Activated CD8-positive, alpha-beta memory T cell treated with anti-CD3 and anti-CD28 coated beads, Interleukin-2, amount 10 ng/mL, durations not matched to agents 7 days and 5 days (primary cell): ENCODE measurements at regions of chr3 and their contacts with region 1.

Region 1: GRCh38 chr3:30199096-30199759 is 407.2 kb upstream of the TGFBR2 start:
- DNase-seq: peak; percentile 73
- ATAC-seq: no peak
- H3K4me3 Mint-ChIP-seq: no peak overlapping the region
- H3K27ac Mint-ChIP-seq: no peak overlapping the region
- H3K4me1 Mint-ChIP-seq: no peaks in the 10 kb centered on the region
- H3K27me3 Mint-ChIP-seq: no peaks in the 10 kb centered on the region

Region 2: DNA sequence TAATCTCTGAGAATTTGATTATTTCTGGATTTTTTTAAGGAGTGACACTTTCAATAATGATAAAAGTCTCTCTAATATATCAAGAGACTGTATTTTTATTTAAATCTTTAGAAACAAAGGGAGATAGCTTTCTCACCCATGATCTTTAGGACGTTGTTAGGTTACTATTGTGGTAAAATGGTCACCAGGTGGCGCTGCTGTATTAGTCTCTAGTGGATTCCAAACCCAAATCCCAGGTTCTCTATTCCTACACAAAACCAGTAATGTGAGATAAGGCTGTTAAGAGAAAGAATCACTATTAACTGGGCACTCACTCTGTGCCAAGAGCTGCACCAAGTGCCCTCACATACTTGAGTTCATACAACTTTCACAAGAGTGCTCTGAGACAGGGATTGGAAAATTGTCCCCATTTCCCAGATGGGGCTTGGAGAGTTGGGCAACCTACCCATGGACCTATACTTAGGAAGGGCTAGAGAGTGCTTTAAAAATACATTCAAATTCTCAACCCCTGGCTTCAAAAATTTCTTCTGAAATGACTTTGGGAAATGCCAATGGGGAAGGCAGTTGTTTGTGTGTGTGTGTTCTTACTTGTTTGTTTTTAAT is 186.2 kb before region 1 on chr3:
- CTCF ChIA-PET with region 1: interaction called, 19 read pairs
- DNase-seq: peak; percentile 53
- ATAC-seq: no peak
- H3K4me3 Mint-ChIP-seq: no peak overlapping the region
- H3K27ac Mint-ChIP-seq: no peak overlapping the region
- H3K4me1 Mint-ChIP-seq: peaks cover 3% of the 10 kb centered on the region
- H3K27me3 Mint-ChIP-seq: peaks cover 20% of the 10 kb centered on the region

Region 3: DNA sequence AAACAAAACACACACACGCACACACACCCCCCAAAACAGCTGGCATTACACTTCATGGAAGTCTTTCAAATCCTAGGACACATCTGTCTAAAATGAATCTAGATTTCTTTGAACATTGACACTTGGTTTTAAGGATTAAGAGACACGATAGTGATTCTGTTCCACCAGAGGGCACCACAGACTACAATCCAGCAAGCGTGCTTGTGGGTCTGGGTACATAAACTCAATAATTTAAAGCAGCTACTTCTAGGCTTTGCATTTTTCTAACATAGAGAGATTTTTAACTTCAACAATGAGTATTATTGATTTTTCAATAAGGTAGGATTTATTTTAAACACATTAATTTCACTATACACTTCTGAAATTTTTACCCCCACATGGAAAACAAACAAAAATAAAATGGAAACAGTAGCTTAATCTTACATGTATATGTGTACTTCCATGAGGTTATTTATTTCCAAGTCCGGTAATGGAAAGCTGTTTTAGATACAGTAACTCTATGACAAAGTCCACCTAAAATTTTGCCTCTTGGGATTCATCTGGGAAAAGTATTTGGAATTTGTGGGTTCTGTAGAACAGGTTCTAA is 156.9 kb before region 1 on chr3:
- CTCF ChIA-PET with region 1: interaction called, 36 read pairs
- DNase-seq: peak; percentile 64
- ATAC-seq: no peak
- H3K4me3 Mint-ChIP-seq: no peak overlapping the region
- H3K27ac Mint-ChIP-seq: no peak overlapping the region
- H3K4me1 Mint-ChIP-seq: no peaks in the 10 kb centered on the region
- H3K27me3 Mint-ChIP-seq: peaks cover 24% of the 10 kb centered on the region

Region 4: GRCh38 chr3:30112902-30113484 is 86.2 kb before region 1 on chr3:
- CTCF ChIA-PET with region 1: interaction called, 11 read pairs
- DNase-seq: no peak
- ATAC-seq: peak; percentile 36
- H3K4me3 Mint-ChIP-seq: no peak overlapping the region
- H3K27ac Mint-ChIP-seq: no peak overlapping the region
- H3K4me1 Mint-ChIP-seq: no peaks in the 10 kb centered on the region
- H3K27me3 Mint-ChIP-seq: peaks cover 4% of the 10 kb centered on the region

Region 5: DNA sequence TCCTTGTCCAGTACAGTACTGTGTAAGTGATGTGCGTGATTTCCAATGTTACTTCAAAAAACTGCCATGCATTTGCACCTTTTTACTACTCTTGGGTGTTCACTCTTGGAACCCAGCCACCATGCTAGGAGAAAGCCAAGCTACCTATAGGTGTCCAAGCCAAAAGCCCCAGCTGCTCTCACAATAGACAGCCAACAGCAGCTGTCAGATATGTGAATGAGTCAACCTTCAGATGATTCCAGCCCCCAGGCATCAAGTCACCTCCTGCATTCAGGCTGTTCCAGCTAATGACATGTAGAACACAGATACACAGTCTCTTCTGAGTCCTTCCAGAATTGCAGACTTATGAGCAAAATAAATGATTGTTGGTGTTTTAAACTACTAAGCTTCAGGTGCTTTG is 10.5 kb before region 1 on chr3:
- CTCF ChIA-PET with region 1: interaction called, 11 read pairs
- DNase-seq: no peak
- ATAC-seq: no peak
- H3K4me3 Mint-ChIP-seq: no peak overlapping the region
- H3K27ac Mint-ChIP-seq: no peak overlapping the region
- H3K4me1 Mint-ChIP-seq: no peaks in the 10 kb centered on the region
- H3K27me3 Mint-ChIP-seq: peaks cover 13% of the 10 kb centered on the region

Region 6: DNA sequence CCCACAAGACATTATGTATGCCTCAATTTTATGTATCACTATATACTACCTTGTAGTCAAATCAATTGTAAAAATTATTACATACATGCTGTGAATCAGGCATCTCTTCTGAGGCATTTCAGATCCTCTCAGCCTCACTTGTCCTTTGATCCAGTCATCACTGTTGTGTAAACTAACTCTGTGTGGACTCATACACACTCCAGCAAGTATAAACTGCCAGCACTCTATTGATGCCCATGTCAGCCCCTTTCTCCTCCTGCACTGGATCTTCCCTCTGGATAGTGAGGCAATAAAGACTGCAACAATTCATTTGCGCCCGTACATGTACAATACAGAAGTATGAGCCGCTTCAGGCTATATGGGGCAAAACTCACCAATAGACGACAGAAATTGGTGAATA is 42.5 kb after region 1 on chr3:
- CTCF ChIA-PET with region 1: no interaction called
- DNase-seq: no peak
- ATAC-seq: no peak
- H3K4me3 Mint-ChIP-seq: no peak overlapping the region
- H3K27ac Mint-ChIP-seq: no peak overlapping the region
- H3K4me1 Mint-ChIP-seq: no peaks in the 10 kb centered on the region
- H3K27me3 Mint-ChIP-seq: peaks cover 12% of the 10 kb centered on the region

Region 7: GRCh38 chr3:30256474-30256873 is 57.2 kb after region 1 on chr3:
- CTCF ChIA-PET with region 1: no interaction called
- DNase-seq: no peak
- ATAC-seq: no peak
- H3K4me3 Mint-ChIP-seq: no peak overlapping the region
- H3K27ac Mint-ChIP-seq: no peak overlapping the region
- H3K4me1 Mint-ChIP-seq: no peaks in the 10 kb centered on the region
- H3K27me3 Mint-ChIP-seq: no peaks in the 10 kb centered on the region

Region 8: GRCh38 chr3:30693470-30694120 is 494.4 kb after region 1 on chr3:
- CTCF ChIA-PET with region 1: interaction called, 21 read pairs
- DNase-seq: peak; percentile 60
- ATAC-seq: peak; percentile 93
- H3K4me3 Mint-ChIP-seq: no peak overlapping the region
- H3K27ac Mint-ChIP-seq: no peak overlapping the region
- H3K4me1 Mint-ChIP-seq: peaks cover 34% of the 10 kb centered on the region
- H3K27me3 Mint-ChIP-seq: no peaks in the 10 kb centered on the region